ENCODE measurements at regions of chr5 and their contacts with region 1.

Region 1: GRCh38 chr5:32450952-32451351 is 6.4 kb upstream of the ZFR start:
- DNase-seq: no peak
- ATAC-seq: peak; percentile 72
- H3K4me3 Mint-ChIP-seq: no peak overlapping the region
- H3K27ac Mint-ChIP-seq: no peak overlapping the region
- H3K4me1 Mint-ChIP-seq: peaks cover 5% of the 10 kb centered on the region
- H3K27me3 Mint-ChIP-seq: peaks cover 9% of the 10 kb centered on the region
- CTCF ChIP-seq: no peak

Region 2: GRCh38 chr5:32439091-32439642 is 11.8 kb before region 1 on chr5:
- CTCF ChIA-PET with region 1: interaction called, 12 read pairs
- POLR2A ChIA-PET with region 1: no interaction called
- DNase-seq: no peak
- ATAC-seq: no peak
- H3K4me3 Mint-ChIP-seq: no peak overlapping the region
- H3K27ac Mint-ChIP-seq: no peak overlapping the region
- H3K4me1 Mint-ChIP-seq: peaks cover 38% of the 10 kb centered on the region
- H3K27me3 Mint-ChIP-seq: no peaks in the 10 kb centered on the region
- CTCF ChIP-seq: no peak

Measured in WTC11 (cell line).